ENCODE measurements at regions of chr16 and their contacts with region 1.

Region 1: GRCh38 chr16:30407102-30407803 is at the start of gene ZNF771:
- DNase-seq: peak; percentile 92 to 97 (median 94)
- H3K4me3 ChIP-seq: peak within 1 kb of the TSS; percentile 59 to 98 (median 83)
- H3K27ac ChIP-seq: peak within 1 kb of the TSS in 58 of 59 donors; percentile 60 to 95 (median 86)
- H3K27me3 ChIP-seq: no peaks in the 10 kb centered on the region
- CTCF ChIP-seq: peak in 32 of 56 donors; percentile 4 to 47 (median 27)
- total RNA-seq, gene ZNF771: 15.2 to 48.7 (median 27.1) TPM

Region 2: GRCh38 chr16:30122604-30123160 is 284.6 kb before region 1 on chr16:
- intact Hi-C with region 1: loop called in 1 of 2 experiments (anchors 5 kb)
- DNase-seq: peak in 1 of 10 donors; percentile 23
- H3K4me3 ChIP-seq: peak overlapping the region; percentile 69 to 96 (median 88)
- H3K27ac ChIP-seq: peak overlapping the region; percentile 90 to 100 (median 97)
- H3K27me3 ChIP-seq: no peaks in the 10 kb centered on the region
- CTCF ChIP-seq: no peak

Region 3: DNA sequence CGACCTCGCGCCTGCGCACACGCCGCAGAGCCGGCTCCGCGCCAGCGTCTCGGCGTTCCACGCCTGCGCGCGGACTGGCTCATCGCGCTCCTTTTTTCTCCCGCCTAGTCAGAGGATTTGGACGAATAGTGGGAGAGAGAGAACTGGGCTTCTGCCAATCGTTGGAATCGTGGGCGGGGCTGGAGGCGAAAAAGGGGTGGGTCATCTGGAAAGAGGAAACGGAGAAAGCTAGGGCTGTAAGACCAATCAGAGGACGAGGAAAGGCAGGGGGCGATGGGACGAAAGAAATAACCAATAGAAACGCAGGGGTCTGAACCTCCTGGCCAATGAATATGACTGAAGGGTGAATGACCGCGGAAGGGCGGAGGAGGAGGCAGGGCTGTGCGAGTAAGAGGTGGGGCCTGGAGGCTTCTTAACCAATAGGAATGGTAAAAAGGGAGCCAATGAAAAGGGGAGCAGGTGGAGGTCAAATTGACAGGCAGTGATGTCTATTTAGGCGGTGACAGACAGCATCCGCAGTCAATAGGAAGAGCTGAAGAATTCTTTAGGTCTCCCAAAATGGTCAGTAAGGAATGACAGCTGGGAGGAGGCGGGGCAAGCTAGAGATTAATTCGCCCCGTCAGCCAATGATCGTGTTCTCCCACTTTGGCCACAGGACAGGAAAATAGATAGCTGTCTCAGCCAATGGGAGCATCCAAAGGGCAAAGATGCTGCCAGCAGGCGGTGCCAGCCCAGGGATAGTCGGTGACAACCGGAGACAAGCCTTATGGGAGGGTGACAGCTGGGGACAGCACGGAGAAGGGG is 36.6 kb before region 1 on chr16 and contains the start of gene TBC1D10B:
- intact Hi-C with region 1: loop called in 1 of 2 experiments (anchors 5 kb)
- DNase-seq: peak; percentile 96 to 100 (median 100)
- H3K4me3 ChIP-seq: peak within 1 kb of the TSS; percentile 52 to 98 (median 90)
- H3K27ac ChIP-seq: peak within 1 kb of the TSS; percentile 86 to 100 (median 99)
- H3K27me3 ChIP-seq: no peaks in the 10 kb centered on the region
- CTCF ChIP-seq: peak in 44 of 56 donors; percentile 11 to 62 (median 38)
- total RNA-seq, gene TBC1D10B: 50.3 to 87.6 (median 67.1) TPM